ENCODE measurements at regions of chr9 and their contacts with region 1.

Region 1: DNA sequence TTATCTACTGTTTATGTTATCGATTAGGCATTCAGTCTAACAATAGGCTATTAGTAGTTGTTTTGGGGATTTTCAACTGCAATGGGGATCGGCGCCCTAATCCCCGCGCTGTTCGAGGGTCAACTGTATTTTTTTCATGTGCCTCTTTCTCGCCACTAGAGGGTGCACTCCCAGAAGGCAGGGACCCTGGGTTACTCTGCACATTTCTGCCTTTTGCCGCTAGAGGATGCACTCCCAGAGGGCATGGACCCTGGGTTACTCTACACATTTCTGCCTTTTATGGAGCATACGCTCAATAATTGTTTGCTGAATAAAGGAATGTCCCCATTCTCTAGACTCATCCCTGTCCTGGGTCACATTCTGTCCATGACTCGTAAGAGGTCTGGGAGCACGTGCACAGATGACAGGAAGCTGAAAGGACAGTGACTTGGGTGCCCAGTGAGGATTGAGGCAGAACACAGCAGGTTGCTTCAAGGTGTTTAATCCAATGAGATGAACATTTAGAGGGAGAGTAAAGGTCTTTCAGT is 27.9 kb upstream of the RECK start:
- DNase-seq: peak; percentile 74
- ATAC-seq: peak; percentile 86
- H3K4me3 ChIP-seq: no peak overlapping the region
- H3K27ac ChIP-seq: no peak overlapping the region
- H3K4me1 ChIP-seq: no peaks in the 10 kb centered on the region
- H3K27me3 ChIP-seq: no peaks in the 10 kb centered on the region
- CTCF ChIP-seq: peak; percentile 98

Region 2: DNA sequence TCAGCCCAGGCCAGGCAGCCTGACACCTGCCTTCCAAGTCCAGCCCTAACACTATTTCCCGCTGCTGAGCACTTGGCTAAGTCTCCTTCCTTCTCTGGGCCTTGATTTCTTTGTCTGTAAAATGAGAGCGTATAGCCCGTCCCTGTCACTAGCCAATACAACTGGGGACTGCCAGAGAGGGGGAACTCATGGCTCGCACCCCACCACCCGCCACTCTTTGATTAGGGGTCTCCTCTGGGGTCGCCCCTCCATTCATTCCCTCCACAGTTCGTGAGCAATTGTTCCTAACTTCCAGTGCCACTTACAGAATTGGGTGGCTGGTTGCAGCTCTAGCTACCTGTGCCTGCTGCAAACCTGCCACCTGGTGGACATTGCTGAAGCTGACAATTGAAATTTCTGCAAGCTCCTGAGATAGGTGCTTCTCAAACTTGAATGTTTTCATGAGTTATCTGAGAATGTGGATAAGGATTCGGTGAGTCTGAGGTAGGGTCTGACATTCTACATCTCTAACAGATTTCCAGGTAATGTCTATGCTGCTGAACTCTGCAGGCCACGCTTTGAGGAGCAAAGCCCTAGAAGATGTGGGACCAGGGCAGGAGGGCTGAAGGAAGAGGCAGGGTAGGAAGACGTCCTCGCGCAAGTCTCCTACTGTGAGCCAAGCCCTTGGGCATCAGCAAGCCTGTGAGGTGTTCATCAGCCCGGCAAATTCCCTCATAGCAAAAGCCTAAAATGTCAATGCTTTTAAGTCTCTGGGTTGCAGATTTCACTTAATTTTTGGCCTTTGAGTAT is 14.6 kb after region 1 on chr9:
- CTCF ChIA-PET with region 1: interaction called, 5 read pairs
- POLR2A ChIA-PET with region 1: no interaction called
- intact Hi-C with region 1: loop called (anchors 2 kb)
- DNase-seq: peak; percentile 75
- ATAC-seq: peak; percentile 78
- H3K4me3 ChIP-seq: no peak overlapping the region
- H3K27ac ChIP-seq: no peak overlapping the region
- H3K4me1 ChIP-seq: no peaks in the 10 kb centered on the region
- H3K27me3 ChIP-seq: no peaks in the 10 kb centered on the region
- CTCF ChIP-seq: peak; percentile 82

Region 3: GRCh38 chr9:36074870-36075532 is 66.2 kb after region 1 on chr9:
- CTCF ChIA-PET with region 1: no interaction called
- POLR2A ChIA-PET with region 1: no interaction called
- intact Hi-C with region 1: no loop called
- DNase-seq: no peak
- ATAC-seq: no peak
- H3K4me3 ChIP-seq: no peak overlapping the region
- H3K27ac ChIP-seq: no peak overlapping the region
- H3K4me1 ChIP-seq: no peaks in the 10 kb centered on the region
- H3K27me3 ChIP-seq: no peaks in the 10 kb centered on the region
- CTCF ChIP-seq: no peak

Region 4: GRCh38 chr9:36110434-36110833 is 101.6 kb after region 1 on chr9:
- CTCF ChIA-PET with region 1: interaction called, 12 read pairs
- POLR2A ChIA-PET with region 1: no interaction called
- intact Hi-C with region 1: loop called (anchors 5 kb)
- DNase-seq: peak; percentile 11
- ATAC-seq: no peak
- H3K4me3 ChIP-seq: no peak overlapping the region
- H3K27ac ChIP-seq: no peak overlapping the region
- H3K4me1 ChIP-seq: no peaks in the 10 kb centered on the region
- H3K27me3 ChIP-seq: no peaks in the 10 kb centered on the region
- CTCF ChIP-seq: peak; percentile 25; the same call in 1 of the 2 replicates

Measured in PC-3 (cell line).